ENCODE measurements at regions of chr2 and their contacts with region 1.

Region 1: DNA sequence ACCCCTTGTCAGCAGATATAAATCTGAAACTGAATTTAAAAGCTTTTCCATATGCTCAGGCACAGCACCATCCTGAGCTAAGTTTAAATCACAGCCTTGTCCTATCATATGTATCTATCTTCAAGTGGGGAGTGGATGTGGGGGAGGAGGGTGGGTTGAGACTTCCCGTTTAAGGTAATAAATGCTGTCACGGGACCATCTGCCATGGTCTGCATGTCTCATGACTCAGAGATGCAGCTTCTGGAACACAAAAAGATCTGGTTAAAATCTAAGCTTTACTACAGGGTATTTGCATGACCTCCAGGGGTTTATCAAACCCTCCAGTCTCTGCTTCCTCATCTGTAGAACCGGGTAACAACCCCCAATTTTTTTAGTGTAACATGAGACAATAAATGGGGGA is 377.7 kb upstream of the ST6GAL2 start:
- DNase-seq: no peak
- ATAC-seq: no peak
- H3K4me3 ChIP-seq: no peak overlapping the region
- H3K27ac ChIP-seq: no peak overlapping the region
- H3K4me1 ChIP-seq: no peaks in the 10 kb centered on the region
- H3K27me3 ChIP-seq: no peaks in the 10 kb centered on the region
- CTCF ChIP-seq: no peak
- EP300 ChIP-seq: no peak
- POLR2A ChIP-seq: no peak
- RAD21 ChIP-seq: no peak

Region 2: DNA sequence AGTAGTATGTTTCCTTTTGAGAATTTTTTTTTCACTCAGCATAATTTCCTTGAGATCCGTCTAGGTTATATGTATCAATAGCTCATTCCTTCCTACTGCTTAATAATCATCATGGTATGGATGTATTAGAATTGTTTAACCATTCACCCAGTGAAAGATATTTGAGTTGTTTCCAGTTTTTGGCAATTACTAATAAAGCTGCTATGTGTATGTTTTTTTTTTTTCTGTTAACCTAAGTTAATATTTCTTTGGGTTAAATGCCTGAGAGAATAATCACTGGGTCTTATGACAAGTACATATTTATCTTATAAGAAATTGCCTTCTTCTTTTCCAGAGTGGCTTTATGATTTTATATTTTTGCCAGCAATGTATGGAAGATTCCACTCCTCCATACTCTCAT is 281.3 kb before region 1 on chr2:
- CTCF ChIA-PET with region 1: no interaction called
- POLR2A ChIA-PET with region 1: no interaction called
- in situ Hi-C with region 1: no loop called
- intact Hi-C with region 1: no loop called
- DNase-seq: no peak
- ATAC-seq: no peak
- H3K4me3 ChIP-seq: no peak overlapping the region
- H3K27ac ChIP-seq: no peak overlapping the region
- H3K4me1 ChIP-seq: no peaks in the 10 kb centered on the region
- H3K27me3 ChIP-seq: no peaks in the 10 kb centered on the region
- CTCF ChIP-seq: no peak
- EP300 ChIP-seq: no peak
- POLR2A ChIP-seq: no peak
- RAD21 ChIP-seq: no peak

Region 3: DNA sequence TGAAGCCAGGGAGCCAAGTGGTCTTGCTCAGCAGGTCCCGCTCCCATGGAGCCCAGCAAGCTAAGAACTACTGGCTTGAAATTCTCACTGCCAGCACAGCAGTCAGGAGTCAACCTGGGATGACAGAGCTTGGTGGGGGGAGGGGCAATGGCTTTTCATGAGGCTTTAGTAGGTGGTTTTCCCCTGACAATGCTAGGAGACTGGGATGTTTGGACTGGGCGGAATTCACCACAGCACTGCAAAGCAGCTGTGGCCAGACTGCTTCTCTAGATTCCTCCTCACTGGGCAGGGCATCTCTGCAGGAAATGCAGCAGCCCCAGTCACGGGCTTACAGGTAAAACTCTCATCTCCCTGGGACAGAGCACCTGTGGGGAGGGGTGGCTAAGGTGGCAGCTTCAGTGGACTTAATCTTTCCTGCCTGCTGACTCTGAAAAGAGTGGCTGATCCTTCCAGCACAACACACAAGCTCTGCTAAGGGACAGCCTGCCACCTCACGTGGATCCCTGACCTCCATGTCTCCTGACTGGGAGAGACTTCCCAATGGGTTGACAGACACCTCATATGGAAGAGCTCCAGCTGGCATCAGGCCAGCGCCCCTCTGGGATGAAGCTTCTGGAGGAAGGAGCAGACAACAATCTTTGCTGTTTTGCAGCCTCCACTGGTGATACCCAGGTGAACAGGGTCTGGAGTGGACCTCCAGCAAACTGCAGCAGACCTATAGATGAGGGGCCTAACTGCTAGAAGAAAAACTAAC is 28.0 kb before region 1 on chr2:
- CTCF ChIA-PET with region 1: no interaction called
- POLR2A ChIA-PET with region 1: no interaction called
- in situ Hi-C with region 1: no loop called
- intact Hi-C with region 1: loop called (anchors 1 kb)
- DNase-seq: no peak
- ATAC-seq: no peak
- H3K4me3 ChIP-seq: no peak overlapping the region
- H3K27ac ChIP-seq: no peak overlapping the region
- H3K4me1 ChIP-seq: no peaks in the 10 kb centered on the region
- H3K27me3 ChIP-seq: no peaks in the 10 kb centered on the region
- CTCF ChIP-seq: no peak
- EP300 ChIP-seq: no peak
- POLR2A ChIP-seq: no peak
- RAD21 ChIP-seq: no peak

Region 4: GRCh38 chr2:107354175-107354574 is 90.5 kb after region 1 on chr2:
- CTCF ChIA-PET with region 1: no interaction called
- POLR2A ChIA-PET with region 1: no interaction called
- in situ Hi-C with region 1: no loop called
- intact Hi-C with region 1: no loop called
- DNase-seq: no peak
- ATAC-seq: no peak
- H3K4me3 ChIP-seq: no peak overlapping the region
- H3K27ac ChIP-seq: no peak overlapping the region
- H3K4me1 ChIP-seq: no peaks in the 10 kb centered on the region
- H3K27me3 ChIP-seq: no peaks in the 10 kb centered on the region
- CTCF ChIP-seq: no peak
- EP300 ChIP-seq: no peak
- POLR2A ChIP-seq: no peak
- RAD21 ChIP-seq: no peak

Measured in HepG2 (cell line).